Gastrocnemius medialis (tissue), 4 donors: ENCODE measurements at regions of chr15 and their contacts with region 1.

Region 1: DNA sequence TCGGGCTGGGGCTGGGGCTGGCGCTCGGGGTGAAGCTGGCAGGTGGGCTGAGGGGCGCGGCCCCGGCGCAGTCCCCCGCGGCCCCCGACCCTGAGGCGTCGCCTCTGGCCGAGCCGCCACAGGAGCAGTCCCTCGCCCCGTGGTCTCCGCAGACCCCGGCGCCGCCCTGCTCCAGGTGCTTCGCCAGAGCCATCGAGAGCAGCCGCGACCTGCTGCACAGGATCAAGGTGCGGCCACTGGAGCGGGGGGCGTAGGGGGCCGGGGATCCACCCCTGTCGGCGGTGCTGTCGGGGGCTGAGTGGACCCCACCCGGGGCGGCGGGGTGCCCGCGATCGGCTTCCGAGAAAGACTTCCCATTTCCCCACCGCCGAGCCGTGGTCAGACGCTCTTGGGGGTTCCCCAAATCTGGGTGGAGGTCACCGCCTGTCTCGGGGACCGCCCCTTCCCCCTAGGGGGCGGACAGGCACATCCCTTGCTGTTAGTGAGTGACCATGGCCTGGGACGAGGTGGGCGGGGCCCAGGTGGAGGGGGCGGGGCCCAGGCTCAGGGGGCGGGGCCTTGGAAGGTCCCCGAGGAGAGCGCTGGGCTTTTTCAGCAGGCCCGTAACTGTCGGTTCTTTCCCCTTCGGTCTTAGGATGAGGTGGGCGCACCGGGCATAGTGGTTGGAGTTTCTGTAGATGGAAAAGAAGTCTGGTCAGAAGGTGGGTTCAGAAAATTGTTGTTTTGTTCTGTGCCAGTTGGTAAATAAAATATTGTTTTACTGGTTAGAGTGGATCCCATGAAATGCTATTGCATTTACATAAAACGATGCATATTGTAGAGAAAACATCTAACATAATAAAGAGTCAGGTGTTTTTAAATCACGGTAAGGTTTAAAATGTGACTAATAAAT is 587 bp downstream of the LACTB start:
- DNase-seq: peak; percentile 80 to 91
- ATAC-seq: peak; percentile 92 to 95
- H3K4me3 ChIP-seq: peak overlapping the region; percentile 77 to 99 (median 86)
- H3K27ac ChIP-seq: peak overlapping the region; percentile 90 to 99 (median 93)
- H3K4me1 ChIP-seq: peaks cover 4 to 13% of the 10 kb centered on the region in 2 donors
- H3K27me3 ChIP-seq: no peaks in the 10 kb centered on the region
- CTCF ChIP-seq: peak in 4 of 5 experiments; percentile 13 to 50 (median 31)
- POLR2A ChIP-seq: peak; percentile 48 to 65

Region 2: DNA sequence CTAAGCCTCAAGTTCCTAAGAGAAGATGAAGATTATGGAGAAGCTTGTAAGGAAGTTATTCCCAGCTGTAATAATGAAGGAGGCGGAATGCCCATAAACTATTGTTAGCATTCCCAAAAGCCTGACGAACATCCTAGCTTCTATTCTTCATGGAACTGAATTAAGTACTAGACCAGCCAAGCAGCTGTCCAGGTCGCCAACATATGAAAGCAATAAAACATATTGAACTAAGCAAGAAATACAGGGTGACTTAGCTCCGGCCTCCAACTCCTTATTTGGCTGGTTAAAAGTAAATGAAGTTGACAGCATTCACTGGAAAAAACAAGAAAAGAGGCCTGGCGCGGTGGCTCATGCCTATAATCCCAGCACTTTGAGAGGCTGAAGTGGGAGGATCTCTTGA is 253.7 kb before region 1 on chr15:
- in situ Hi-C with region 1: no loop called
- intact Hi-C with region 1: no loop called
- DNase-seq: no peak
- ATAC-seq: no peak
- H3K4me3 ChIP-seq: no peak overlapping the region
- H3K27ac ChIP-seq: no peak overlapping the region
- H3K4me1 ChIP-seq: no peaks in the 10 kb centered on the region
- H3K27me3 ChIP-seq: no peaks in the 10 kb centered on the region
- CTCF ChIP-seq: no peak
- POLR2A ChIP-seq: no peak

Region 3: DNA sequence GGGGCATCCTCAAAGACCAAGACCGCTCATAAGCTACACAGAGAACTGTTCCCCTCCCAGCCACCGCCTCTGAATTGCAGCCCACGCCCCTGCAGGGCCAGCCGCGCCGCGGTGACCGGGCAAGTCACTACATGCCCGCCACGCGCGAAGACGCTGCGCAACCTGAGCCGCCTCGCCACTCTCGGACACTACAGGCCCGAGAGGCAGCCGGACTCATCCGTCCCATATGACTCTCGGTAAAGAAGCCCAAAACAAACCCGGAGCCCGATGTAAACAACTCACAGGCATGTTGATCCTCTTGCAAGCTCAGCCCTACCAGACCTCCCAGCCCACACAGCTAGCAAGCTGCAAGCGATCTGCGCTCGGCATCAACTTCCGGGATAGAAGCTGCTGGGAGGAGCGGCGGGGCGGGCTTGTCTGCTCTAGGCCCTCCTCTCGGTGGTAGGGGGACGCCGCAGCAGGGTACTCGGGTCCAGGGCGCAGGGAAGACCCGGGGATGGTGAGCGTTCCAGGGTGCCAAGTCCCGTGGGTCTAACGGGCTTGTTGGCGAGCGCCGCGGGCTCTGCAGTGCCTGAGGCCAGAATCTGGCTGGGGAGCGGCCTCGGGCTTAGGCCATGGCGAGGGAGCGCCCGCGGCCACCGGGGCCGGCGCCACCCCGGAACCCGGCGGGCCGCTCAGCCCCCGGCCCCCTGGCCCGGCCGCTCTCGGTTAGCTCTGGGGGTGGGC is 35.0 kb after region 1 on chr15 and contains the start of gene RPS27L:
- in situ Hi-C with region 1: no loop called
- intact Hi-C with region 1: loop called (anchors 1 kb)
- DNase-seq: peak; percentile 89
- ATAC-seq: peak; percentile 92 to 93
- H3K4me3 ChIP-seq: peak within 1 kb of the TSS; percentile 68 to 91 (median 89)
- H3K27ac ChIP-seq: peak within 1 kb of the TSS; percentile 86 to 98 (median 94)
- H3K4me1 ChIP-seq: peaks cover 13 to 28% of the 10 kb centered on the region in 2 donors
- H3K27me3 ChIP-seq: no peaks in the 10 kb centered on the region
- CTCF ChIP-seq: no peak
- POLR2A ChIP-seq: peak; percentile 84 to 87
- total RNA-seq, gene RPS27L: 53.0 to 145 (median 78.0) TPM

Region 4: GRCh38 chr15:63221346-63221745 is 99.1 kb after region 1 on chr15:
- in situ Hi-C with region 1: no loop called
- intact Hi-C with region 1: no loop called
- DNase-seq: peak; percentile 59 to 66
- ATAC-seq: peak; percentile 94 to 96
- H3K4me3 ChIP-seq: no peak overlapping the region
- H3K27ac ChIP-seq: peak overlapping the region in 2 of 4 donors; percentile 23 to 51
- H3K4me1 ChIP-seq: peaks cover 13 to 21% of the 10 kb centered on the region in 2 donors
- H3K27me3 ChIP-seq: no peaks in the 10 kb centered on the region
- CTCF ChIP-seq: no peak
- POLR2A ChIP-seq: no peak

Region 5: DNA sequence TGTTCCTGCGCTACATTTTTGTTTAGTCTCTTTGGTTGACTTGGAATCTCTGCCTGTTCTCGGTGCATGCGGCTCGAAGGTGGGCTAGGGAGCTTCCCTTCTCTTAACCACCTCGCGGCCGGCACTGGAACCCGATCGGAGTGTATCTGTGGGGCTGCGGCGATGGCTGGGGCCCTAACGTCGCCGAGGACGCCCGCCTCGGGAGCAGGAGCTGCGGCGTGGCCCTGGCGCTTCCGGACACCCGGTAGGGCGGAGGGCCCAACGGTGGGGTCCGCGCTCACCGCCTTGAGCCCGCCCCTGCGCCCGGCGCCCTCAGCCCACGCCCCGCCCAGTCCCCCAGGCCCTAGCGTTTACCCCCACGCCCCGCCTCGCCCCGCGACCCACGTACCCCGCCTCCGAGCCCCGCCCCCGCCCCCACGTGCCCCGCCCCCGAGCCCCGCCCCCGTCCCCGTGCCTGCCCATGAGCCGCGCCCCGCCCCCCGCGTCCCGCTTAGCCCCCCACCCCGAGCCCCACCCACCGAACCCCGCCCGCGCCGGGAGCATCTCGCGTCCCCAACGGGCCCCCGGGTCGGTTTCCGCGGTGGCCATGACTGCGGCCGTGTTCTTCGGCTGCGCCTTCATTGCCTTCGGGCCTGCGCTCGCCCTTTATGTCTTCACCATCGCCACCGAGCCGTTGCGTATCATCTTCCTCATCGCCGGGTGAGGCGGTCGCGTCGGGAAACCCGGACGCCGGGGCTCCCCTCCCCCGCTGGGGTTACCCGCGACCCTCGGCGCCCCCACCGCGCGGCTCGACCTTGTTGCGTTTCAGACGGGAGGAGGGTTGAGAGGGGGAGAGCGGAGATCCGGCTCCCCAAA is 155.0 kb after region 1 on chr15 and contains the start of gene APH1B:
- in situ Hi-C with region 1: no loop called
- intact Hi-C with region 1: loop called (anchors 5 kb)
- DNase-seq: peak; percentile 64 to 68
- ATAC-seq: peak; percentile 68 to 81
- H3K4me3 ChIP-seq: peak within 1 kb of the TSS; percentile 84 to 99 (median 92)
- H3K27ac ChIP-seq: peak within 1 kb of the TSS; percentile 82 to 89 (median 86)
- H3K4me1 ChIP-seq: peaks cover 0 to 3% of the 10 kb centered on the region in 2 donors
- H3K27me3 ChIP-seq: no peaks in the 10 kb centered on the region
- CTCF ChIP-seq: no peak
- POLR2A ChIP-seq: peak; percentile 26 to 53
- total RNA-seq, gene APH1B: 2.4 to 5.6 (median 2.9) TPM

Region 6: GRCh38 chr15:63402498-63403253 is 280.4 kb after region 1 on chr15:
- in situ Hi-C with region 1: no loop called
- intact Hi-C with region 1: loop called (anchors 10 kb)
- DNase-seq: no peak
- ATAC-seq: peak in 1 of 2 donors; percentile 68
- H3K4me3 ChIP-seq: no peak overlapping the region
- H3K27ac ChIP-seq: no peak overlapping the region
- H3K4me1 ChIP-seq: no peaks in the 10 kb centered on the region
- H3K27me3 ChIP-seq: no peaks in the 10 kb centered on the region
- CTCF ChIP-seq: peak; percentile 51 to 73 (median 56)
- POLR2A ChIP-seq: no peak